ENCODE measurements at regions of chr16 and their contacts with region 1.

Region 1: GRCh38 chr16:73020362-73020884 is 27.5 kb downstream of the ZFHX3 start:
- DNase-seq: peak; percentile 92
- ATAC-seq: peak; percentile 78
- H3K4me3 ChIP-seq: peak overlapping the region in 2 of 3 experiments; percentile 18 to 24; a peak in 1 of 6 replicates
- H3K27ac ChIP-seq: peak overlapping the region; percentile 70
- H3K4me1 ChIP-seq: peaks cover 94% of the 10 kb centered on the region
- H3K27me3 ChIP-seq: no peaks in the 10 kb centered on the region
- CTCF ChIP-seq: no peak
- EP300 ChIP-seq: peak; percentile 69 to 87; a peak in 3 of 4 replicates
- POLR2A ChIP-seq: peak in 1 of 2 experiments; percentile 32; a peak in 1 of 4 replicates
- RAD21 ChIP-seq: no peak; the same call in 1 of the 2 replicates

Region 2: GRCh38 chr16:73000020-73000906 is 20.2 kb before region 1 on chr16:
- CTCF ChIA-PET with region 1: no interaction called
- POLR2A ChIA-PET with region 1: interaction called, 4 read pairs
- in situ Hi-C with region 1: no loop called
- intact Hi-C with region 1: loop called (anchors 2 kb)
- DNase-seq: peak; percentile 91
- ATAC-seq: peak; percentile 86
- H3K4me3 ChIP-seq: peak overlapping the region; percentile 34 to 59 (median 35); a peak in 5 of 6 replicates
- H3K27ac ChIP-seq: peak overlapping the region; percentile 71
- H3K4me1 ChIP-seq: peaks cover 61% of the 10 kb centered on the region
- H3K27me3 ChIP-seq: no peaks in the 10 kb centered on the region
- CTCF ChIP-seq: peak; percentile 41
- EP300 ChIP-seq: peak in 1 of 2 experiments; percentile 55; a peak in 1 of 4 replicates
- POLR2A ChIP-seq: no peak
- RAD21 ChIP-seq: no peak